ENCODE measurements at regions of chr3 and their contacts with region 1.

Region 1: DNA sequence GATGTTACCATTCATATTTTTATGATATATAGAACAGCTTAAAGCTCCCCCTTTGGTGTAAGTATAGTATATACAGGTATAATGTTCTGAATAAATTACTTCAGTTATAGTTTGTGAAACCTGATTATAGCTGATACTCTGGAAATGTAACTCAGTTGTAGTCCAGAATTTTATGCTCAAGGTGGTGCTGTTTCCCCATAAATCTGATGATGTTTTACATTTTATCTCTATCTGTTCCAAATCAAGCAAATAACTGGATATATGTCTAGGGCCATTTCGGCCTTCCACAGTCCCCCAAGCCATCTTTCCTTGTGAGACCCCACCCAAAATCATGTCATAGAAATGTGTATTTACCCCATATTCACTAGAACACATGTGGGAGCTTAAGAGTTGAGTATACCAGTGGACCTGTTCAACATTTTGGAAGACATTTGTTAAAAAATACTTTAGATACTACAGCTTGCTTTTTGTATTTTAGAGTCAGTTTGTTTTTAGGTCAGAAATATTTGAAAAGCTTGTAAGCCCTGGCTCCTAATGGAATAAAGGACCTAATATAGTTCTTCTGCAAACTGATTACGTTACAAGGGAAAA is 107.1 kb downstream of the ATG7 start:
- DNase-seq: peak; percentile 28
- CTCF ChIP-seq: peak; percentile 52

Region 2: GRCh38 chr3:11651900-11652299 is 272.6 kb after region 1 on chr3:
- in situ Hi-C with region 1: loop called (anchors 10 kb)
- DNase-seq: peak; percentile 44
- CTCF ChIP-seq: peak; percentile 31

Region 3: DNA sequence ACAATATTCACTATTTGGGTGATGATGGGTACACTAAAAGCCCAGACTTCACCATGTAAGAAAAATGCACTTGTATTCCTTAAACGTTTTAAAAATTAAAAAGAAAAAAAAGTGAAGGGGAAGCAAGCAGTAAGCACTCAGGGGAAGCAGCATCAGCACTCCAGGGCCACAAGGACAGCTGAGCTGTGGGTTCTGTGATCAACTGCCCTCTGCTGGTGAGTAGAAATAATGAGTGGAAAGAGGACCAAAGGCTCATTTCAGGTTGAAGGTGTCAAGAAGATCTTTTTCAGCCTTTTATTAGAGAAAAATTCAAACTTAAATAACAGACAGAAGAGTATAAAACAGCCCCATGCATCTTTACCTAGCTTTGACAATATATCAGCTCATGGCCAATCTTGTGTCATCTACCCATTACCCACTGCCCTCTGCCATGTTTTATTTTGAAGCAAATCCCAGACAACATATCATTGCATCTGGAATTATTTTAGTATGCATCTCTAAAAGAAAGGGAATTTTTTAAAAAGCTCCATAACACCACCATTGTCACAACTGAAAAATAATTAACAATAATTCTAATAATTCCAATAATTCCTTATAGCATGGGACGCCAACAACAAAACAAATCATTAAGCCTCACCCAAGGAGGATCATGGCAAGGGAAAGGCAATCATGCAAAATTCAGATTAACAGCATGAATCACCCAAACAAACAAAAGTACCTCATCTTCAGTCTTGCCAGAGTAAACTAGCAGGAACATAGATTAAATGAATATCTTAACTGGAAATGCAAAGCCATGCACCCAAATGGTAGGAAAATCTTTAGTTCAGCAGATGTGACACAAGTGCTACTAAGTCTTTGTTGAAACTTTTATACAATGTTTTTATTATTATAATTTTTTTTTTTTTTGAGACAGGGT is 424.9 kb after region 1 on chr3:
- in situ Hi-C with region 1: loop called (anchors 25 kb)
- DNase-seq: peak; percentile 60
- CTCF ChIP-seq: peak; percentile 69

Region 4: GRCh38 chr3:12239310-12239709 is 860.0 kb after region 1 on chr3:
- in situ Hi-C with region 1: no loop called
- DNase-seq: no peak
- CTCF ChIP-seq: no peak